GM10248 (cell line): ENCODE measurements at regions of chr10 and their contacts with region 1.

Region 1: DNA sequence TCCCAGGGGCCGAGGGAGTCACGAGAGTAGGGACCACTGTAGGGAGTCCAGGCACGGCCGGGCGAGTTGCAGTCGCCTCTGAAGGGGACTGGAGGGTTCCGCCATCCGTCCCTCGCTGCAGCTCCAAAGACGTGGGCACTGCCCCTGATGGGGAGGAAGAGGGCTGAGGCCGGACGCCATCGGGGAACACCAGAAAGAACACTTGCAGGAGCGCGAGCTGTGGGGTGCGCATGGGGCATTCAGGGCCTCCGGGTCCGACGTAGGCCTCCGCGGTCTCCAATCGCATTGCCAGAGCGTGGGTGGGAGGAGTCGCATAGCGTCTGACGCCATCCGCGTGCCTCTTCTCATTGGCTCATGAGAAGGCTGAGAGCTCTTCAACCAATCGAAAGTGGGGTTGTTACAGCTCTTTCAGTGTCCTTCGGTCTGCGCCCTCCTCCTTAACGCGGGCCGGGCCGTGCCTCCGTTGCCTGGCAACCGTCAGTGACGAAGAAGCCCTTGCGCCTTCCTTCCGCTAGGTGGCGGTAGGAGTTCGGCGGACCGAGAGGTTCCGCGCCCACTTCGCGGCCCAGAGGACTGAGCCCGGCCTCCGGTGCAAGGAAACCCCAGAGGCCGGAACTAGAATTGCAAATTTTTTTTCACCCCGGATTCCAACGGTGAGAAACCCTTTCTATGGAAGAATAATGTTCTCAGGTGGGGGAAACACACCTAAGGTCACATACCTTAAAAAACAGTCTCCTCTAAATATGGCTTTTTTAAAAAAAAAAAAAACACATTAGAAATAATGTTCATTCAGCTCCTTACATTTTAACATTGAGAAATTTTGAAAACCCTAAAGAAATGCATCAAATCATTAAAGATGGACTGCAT is at the start of gene TCTN3:
- DNase-seq: peak; percentile 99
- CTCF ChIP-seq: peak; percentile 98

Region 2: DNA sequence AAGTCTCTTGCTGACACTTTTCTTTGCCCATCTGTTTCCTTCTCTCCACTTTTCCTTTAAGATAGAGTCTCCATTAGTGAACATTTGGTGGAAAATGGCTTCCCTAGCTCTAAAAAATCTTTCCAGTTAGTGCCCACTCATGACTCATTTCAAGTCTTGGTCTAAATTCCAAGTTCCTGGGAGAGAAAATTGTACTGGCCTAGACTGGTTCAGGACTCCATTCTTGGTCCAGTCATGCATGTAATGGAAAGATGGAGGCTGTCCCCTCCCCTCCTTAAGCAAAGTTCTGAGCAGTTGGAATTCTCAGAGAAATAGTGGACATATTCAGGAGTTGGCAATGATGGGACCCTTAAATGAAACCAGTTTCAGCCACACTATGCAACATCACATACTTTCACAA is 33.6 kb before region 1 on chr10:
- CTCF ChIA-PET with region 1: interaction called, 15 read pairs
- POLR2A ChIA-PET with region 1: no interaction called
- DNase-seq: no peak
- CTCF ChIP-seq: no peak

Region 3: GRCh38 chr10:95716466-95717224 is 22.7 kb after region 1 on chr10:
- CTCF ChIA-PET with region 1: interaction called, 23 read pairs
- POLR2A ChIA-PET with region 1: no interaction called
- DNase-seq: no peak
- CTCF ChIP-seq: no peak

Region 4: GRCh38 chr10:95755511-95756004 is 61.7 kb after region 1 on chr10:
- CTCF ChIA-PET with region 1: interaction called, 88 read pairs
- POLR2A ChIA-PET with region 1: interaction called, 9 read pairs
- DNase-seq: peak; percentile 66
- CTCF ChIP-seq: no peak

Region 5: GRCh38 chr10:95814011-95814727 is 120.3 kb after region 1 on chr10:
- CTCF ChIA-PET with region 1: interaction called, 71 read pairs
- POLR2A ChIA-PET with region 1: no interaction called
- DNase-seq: no peak
- CTCF ChIP-seq: no peak

Region 6: GRCh38 chr10:95850791-95851190 is 156.9 kb after region 1 on chr10:
- CTCF ChIA-PET with region 1: interaction called, 305 read pairs
- POLR2A ChIA-PET with region 1: interaction called, 3 read pairs
- DNase-seq: no peak
- CTCF ChIP-seq: no peak

Region 7: GRCh38 chr10:95889830-95890229 is 195.9 kb after region 1 on chr10:
- CTCF ChIA-PET with region 1: interaction called, 11 read pairs
- POLR2A ChIA-PET with region 1: no interaction called
- DNase-seq: no peak
- CTCF ChIP-seq: no peak